Heart left ventricle (tissue), 16 donors: ENCODE measurements at regions of chr13 and their contacts with region 1.

Region 1: DNA sequence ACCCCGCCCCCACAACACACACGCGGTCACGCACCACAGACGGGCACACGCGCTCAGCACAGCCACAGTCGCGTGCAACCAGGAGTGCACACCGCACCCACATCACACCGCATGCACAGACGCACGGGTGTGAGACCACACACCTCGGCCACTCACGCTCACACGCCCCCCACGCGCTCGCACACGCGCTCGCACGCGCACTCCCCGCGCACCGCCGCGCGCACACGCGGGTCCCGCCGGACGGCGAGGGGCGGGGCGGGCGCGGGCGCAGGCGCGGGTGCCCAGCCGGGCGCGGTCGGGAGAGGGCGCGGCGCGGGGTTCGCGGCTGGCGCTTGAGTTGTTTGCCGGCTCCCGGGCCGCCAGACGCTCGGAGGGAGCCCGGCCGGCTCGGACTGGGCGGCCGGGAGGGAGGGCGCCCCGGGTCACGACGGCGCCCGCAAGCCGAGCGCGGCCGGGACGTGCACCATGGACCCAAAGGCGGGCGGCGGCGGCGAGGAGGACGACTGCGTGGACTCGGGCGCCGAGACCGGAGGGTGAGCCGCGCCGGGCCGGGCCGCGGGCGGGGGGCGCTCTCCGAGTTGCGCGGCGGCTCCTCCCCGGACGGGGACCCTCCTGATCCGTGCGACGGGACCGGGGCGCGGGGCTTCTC is at the start of gene FAM124A:
- DNase-seq: peak; percentile 46 to 74 (median 58)
- ATAC-seq: peak in 3 of 4 donors; percentile 65 to 94 (median 93)
- H3K4me3 ChIP-seq: peak within 1 kb of the TSS; percentile 77 to 99 (median 87)
- H3K27ac ChIP-seq: peak within 1 kb of the TSS; percentile 47 to 88 (median 76)
- H3K4me1 ChIP-seq: peaks cover 0 to 28% (median 10%) of the 10 kb centered on the region in 12 donors
- H3K27me3 ChIP-seq: peaks cover 0 to 24% (median 0%) of the 10 kb centered on the region in 9 donors
- CTCF ChIP-seq: peak in 10 of 12 donors; percentile 20 to 61 (median 33)
- POLR2A ChIP-seq: peak in 1 of 2 donors; percentile 39
- total RNA-seq, gene FAM124A: 5.6 to 16.8 (median 8.0) TPM

Region 2: GRCh38 chr13:51148952-51149573 is 73.1 kb before region 1 on chr13:
- intact Hi-C with region 1: loop called in 4 of 10 experiments (anchors 5 kb)
- DNase-seq: peak in 2 of 5 donors; percentile 17 to 33
- ATAC-seq: peak in 3 of 4 donors; percentile 65 to 69 (median 67)
- H3K4me3 ChIP-seq: no peak overlapping the region
- H3K27ac ChIP-seq: peak overlapping the region in 2 of 12 donors; percentile 27 to 38
- H3K4me1 ChIP-seq: peaks cover 0 to 4% (median 0%) of the 10 kb centered on the region in 12 donors
- H3K27me3 ChIP-seq: peaks cover 0 to 4% (median 0%) of the 10 kb centered on the region in 9 donors
- CTCF ChIP-seq: peak; percentile 45 to 76 (median 68)
- POLR2A ChIP-seq: no peak

Region 3: GRCh38 chr13:51154029-51154555 is 68.1 kb before region 1 on chr13:
- intact Hi-C with region 1: loop called in 4 of 10 experiments (anchors 5 kb)
- DNase-seq: no peak
- ATAC-seq: peak in 2 of 4 donors; percentile 16 to 45
- H3K4me3 ChIP-seq: no peak overlapping the region
- H3K27ac ChIP-seq: no peak overlapping the region
- H3K4me1 ChIP-seq: peaks cover 0 to 6% (median 0%) of the 10 kb centered on the region in 12 donors
- H3K27me3 ChIP-seq: peaks cover 0 to 4% (median 0%) of the 10 kb centered on the region in 9 donors
- CTCF ChIP-seq: no peak
- POLR2A ChIP-seq: no peak

Region 4: GRCh38 chr13:51269039-51269438 is 46.9 kb after region 1 on chr13:
- intact Hi-C with region 1: loop called in 1 of 10 experiments (anchors 5 kb)
- DNase-seq: no peak
- ATAC-seq: no peak
- H3K4me3 ChIP-seq: no peak overlapping the region
- H3K27ac ChIP-seq: no peak overlapping the region
- H3K4me1 ChIP-seq: peaks cover 0 to 33% (median 9%) of the 10 kb centered on the region in 12 donors
- H3K27me3 ChIP-seq: no peaks in the 10 kb centered on the region
- CTCF ChIP-seq: no peak
- POLR2A ChIP-seq: no peak

Region 5: DNA sequence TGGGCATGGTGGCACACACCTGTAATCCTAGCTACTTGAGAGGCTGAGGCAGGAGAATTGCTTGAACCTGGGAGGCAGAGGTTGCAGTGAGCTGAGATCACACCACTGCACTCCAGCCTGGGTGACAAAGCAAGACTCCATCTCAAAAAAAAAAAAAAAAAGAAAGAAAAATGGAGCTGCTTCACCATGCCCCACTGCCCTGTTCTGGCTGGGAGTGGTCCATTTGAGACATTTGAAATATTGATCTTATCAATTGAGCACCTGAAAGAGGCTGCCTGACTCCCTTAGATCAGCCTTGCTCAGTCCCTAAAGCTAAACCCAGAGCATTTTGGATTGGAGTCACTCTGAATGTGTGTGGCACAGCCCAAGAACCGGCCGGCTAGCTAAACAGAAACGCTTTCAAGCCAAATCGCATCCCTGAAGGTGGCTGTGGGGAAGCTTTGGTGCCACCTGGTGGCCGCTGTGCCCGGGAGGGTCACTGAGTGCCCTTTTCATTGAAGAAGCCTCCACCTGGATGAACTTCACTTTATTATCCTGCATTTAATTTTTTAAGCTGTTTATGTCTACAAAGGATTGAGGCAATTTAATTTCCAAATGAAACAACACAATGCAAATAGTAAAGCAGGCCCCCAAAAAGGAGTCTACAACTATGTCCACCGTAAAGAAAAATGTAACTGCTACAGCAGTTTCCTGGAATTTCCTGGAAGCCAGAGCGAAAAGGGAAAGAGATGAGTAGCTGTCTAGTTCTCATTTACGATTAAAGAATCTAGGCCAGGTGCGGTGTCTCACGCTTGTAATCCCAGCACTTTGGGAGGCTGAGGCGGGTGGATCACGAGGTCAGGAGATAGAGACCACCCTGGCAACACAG is 64.2 kb after region 1 on chr13:
- intact Hi-C with region 1: loop called (anchors 1 to 5 kb)
- DNase-seq: peak; percentile 72 to 86 (median 77)
- ATAC-seq: peak in 3 of 4 donors; percentile 84 to 86 (median 84)
- H3K4me3 ChIP-seq: no peak overlapping the region
- H3K27ac ChIP-seq: no peak overlapping the region
- H3K4me1 ChIP-seq: peaks cover 0 to 22% (median 3%) of the 10 kb centered on the region in 12 donors
- H3K27me3 ChIP-seq: no peaks in the 10 kb centered on the region
- CTCF ChIP-seq: peak; percentile 85 to 97 (median 93)
- POLR2A ChIP-seq: no peak

Region 6: DNA sequence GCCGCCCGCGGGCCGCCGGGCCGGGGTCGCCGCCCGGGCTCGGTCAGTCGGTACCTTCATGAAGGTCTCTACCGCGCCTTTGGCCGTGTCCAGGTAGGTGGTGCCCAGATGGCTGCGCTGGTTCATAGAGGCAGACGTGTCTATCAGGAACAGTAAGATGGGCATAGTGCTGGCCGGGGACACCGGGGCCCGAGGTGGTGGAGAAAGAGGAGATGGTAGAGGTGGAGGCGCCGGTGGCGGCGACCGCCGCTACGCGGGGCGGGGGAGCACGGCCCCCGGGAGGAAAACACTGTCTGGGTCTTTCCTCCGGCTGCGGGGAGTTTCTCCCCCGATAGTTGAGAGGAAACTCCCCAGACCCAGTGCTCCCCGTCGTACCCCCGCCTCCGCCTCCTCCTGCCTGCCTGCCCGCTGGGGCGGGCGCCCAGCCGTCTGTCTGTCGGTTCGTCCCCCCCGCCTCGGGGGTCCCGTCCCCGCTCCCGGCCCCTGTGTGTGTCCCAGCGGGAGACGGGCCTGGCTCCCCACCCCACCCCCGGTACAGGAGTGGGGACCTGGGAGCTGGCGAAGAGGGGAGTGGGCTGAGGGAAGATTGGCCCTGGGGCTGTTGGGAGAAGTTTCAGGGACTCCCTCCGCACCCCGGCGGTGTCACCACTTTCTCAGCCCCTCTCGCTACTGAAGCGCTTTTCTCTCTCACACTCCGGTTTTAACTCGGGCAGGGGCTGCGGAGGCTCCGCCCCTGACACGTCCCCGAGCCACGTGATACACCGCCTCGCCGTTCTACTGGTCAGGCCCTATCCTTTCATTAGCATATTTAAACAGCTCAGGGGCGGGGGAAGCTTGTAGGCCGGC is 230.4 kb after region 1 on chr13 and contains the start of gene INTS6:
- intact Hi-C with region 1: loop called in 1 of 10 experiments (anchors 5 kb)
- DNase-seq: peak; percentile 99 to 100 (median 100)
- ATAC-seq: peak; percentile 92 to 98 (median 96)
- H3K4me3 ChIP-seq: peak within 1 kb of the TSS; percentile 83 to 99 (median 94)
- H3K27ac ChIP-seq: peak within 1 kb of the TSS; percentile 98 to 100 (median 99)
- H3K4me1 ChIP-seq: peaks cover 0 to 43% (median 21%) of the 10 kb centered on the region in 12 donors
- H3K27me3 ChIP-seq: no peaks in the 10 kb centered on the region
- CTCF ChIP-seq: no peak
- POLR2A ChIP-seq: peak; percentile 100
- total RNA-seq, gene INTS6: 18.4 to 30.2 (median 24.4) TPM

Region 7: DNA sequence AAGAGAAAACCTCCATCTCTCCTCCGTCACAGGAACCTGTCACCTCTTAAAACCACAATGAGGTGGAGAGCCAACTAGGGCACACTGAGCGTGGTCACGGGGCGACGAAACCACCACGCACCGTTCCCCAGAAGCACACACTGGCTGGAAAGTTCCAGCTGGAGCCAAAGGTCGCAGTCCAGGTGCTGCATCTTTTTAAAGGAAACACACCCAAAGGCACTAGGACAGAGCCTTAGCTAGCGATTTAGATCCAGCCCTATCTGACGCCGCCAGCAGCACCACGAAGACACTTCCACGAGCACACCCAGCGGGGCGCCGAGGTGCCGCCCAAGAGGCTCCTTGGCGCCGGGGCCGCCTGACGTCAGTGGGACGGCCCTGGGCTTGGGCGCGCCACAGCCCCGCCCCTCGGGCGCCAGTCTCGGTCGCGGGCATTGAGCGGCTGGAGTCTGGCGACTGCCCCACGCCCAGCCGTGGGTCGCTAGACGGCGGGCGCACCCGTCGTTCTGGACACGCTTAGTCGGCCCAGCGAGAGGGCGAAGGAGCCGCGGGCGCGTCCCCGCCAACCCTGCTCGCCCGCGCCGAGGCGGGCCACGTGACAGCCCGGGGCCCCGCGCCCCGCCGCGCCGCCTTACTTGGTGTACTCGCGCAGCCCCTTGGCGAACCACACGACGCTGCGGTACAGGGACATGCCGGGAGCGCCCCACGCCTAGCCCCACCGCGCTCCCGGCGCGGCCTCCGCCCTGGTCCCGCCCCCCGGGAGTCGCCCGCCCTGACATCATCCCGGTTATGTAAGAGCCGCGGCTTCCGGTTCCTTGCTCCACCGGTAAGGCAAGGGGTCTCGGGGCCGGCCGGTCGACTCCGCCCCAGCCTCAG is 581.5 kb after region 1 on chr13 and contains the start of gene DHRS12:
- intact Hi-C with region 1: loop called in 1 of 10 experiments (anchors 10 kb)
- DNase-seq: peak; percentile 94 to 96 (median 95)
- ATAC-seq: peak; percentile 70 to 93 (median 88)
- H3K4me3 ChIP-seq: peak within 1 kb of the TSS; percentile 60 to 97 (median 78)
- H3K27ac ChIP-seq: peak within 1 kb of the TSS; percentile 97 to 100 (median 100)
- H3K4me1 ChIP-seq: peaks cover 6 to 62% (median 41%) of the 10 kb centered on the region in 12 donors
- H3K27me3 ChIP-seq: no peaks in the 10 kb centered on the region
- CTCF ChIP-seq: peak in 3 of 12 donors; percentile 6 to 27 (median 19)
- POLR2A ChIP-seq: peak in 1 of 2 donors; percentile 94
- total RNA-seq, gene DHRS12: 4.8 to 13.1 (median 12.1) TPM

Region 8: DNA sequence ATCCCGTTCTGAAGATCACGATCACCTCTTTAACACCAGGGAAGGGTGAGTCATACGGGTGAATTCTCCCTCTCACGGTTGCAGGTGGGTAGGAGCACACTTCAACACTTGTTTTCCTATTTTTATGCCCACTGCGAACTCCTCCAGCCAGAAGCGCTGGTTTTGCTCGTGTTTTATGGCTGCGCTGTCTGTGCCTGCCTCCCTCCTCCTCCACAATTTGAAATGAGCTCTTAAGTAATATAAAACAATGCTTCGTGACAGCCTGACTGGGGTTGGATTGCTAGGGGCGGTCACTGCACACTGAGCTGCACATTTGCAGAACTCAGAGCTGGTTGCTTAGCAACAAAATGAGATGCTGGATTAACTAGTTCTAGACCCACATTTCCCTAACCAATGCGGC is 652.5 kb after region 1 on chr13:
- intact Hi-C with region 1: no loop called
- DNase-seq: no peak
- ATAC-seq: no peak
- H3K4me3 ChIP-seq: no peak overlapping the region
- H3K27ac ChIP-seq: no peak overlapping the region
- H3K4me1 ChIP-seq: peaks cover 0 to 5% (median 0%) of the 10 kb centered on the region in 12 donors
- H3K27me3 ChIP-seq: no peaks in the 10 kb centered on the region
- CTCF ChIP-seq: no peak
- POLR2A ChIP-seq: no peak

Region 9: DNA sequence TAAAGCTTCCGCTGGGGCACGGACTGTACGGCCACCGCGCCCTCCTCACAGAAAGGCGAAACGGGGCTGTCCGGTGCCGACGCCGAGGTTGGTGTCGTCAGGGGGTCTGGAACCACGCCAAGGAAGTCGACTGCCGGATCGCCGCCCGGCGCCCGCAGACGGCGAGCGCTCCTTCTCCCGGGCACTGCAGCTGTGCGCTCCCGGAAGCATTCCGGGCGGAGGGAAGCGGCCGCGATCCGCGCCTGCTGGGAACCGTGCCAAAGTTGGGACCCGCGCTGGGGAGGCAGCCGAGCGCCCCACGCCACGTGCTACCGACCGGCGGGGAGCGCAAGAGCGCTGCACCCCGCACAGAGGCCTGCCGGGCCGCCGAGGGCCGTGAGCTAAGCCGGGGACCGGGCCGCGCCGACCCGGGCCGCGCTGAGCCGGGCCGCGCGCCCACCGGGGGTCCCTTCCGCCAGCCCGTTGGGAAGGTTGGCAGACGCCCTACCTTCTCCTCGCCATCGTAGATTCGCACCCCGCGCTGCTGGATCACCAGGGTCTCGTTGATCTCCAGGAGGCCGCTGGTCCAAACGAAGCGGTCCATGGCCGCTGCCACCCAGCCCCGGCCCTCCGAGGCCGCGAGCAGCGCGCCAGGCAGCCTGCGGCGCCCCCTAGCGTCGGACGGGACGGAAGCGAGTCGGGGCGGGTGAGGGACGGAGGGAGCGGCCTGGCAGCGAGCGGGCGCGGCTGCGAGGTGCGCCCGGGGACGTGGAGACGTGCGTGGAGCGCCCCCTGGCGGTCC is 1228.0 kb after region 1 on chr13 and contains the start of gene VPS36:
- intact Hi-C with region 1: no loop called
- DNase-seq: peak; percentile 95 to 98 (median 96)
- ATAC-seq: peak; percentile 72 to 94 (median 88)
- H3K4me3 ChIP-seq: peak within 1 kb of the TSS; percentile 69 to 92 (median 82)
- H3K27ac ChIP-seq: peak within 1 kb of the TSS; percentile 94 to 100 (median 98)
- H3K4me1 ChIP-seq: peaks cover 0 to 41% (median 22%) of the 10 kb centered on the region in 12 donors
- H3K27me3 ChIP-seq: no peaks in the 10 kb centered on the region
- CTCF ChIP-seq: peak; percentile 99 to 100 (median 100)
- POLR2A ChIP-seq: peak in 1 of 2 donors; percentile 71
- total RNA-seq, gene VPS36: 27.8 to 38.5 (median 32.8) TPM